Mammary epithelial cell (primary cell): ENCODE measurements at regions of chr20 and their contacts with region 1.

Region 1: GRCh38 chr20:38962044-38962927 is at the start of gene DHX35:
- DNase-seq: peak; percentile 95
- H3K4me3 ChIP-seq: peak within 1 kb of the TSS; percentile 80 to 84 (median 83)
- H3K27ac ChIP-seq: peak within 1 kb of the TSS; percentile 76
- H3K4me1 ChIP-seq: peaks cover 7% of the 10 kb centered on the region
- H3K27me3 ChIP-seq: no peaks in the 10 kb centered on the region
- CTCF ChIP-seq: peak in 1 of 2 donors; percentile 56
- total RNA-seq, gene DHX35: 8.1 to 9.5 TPM

Region 2: DNA sequence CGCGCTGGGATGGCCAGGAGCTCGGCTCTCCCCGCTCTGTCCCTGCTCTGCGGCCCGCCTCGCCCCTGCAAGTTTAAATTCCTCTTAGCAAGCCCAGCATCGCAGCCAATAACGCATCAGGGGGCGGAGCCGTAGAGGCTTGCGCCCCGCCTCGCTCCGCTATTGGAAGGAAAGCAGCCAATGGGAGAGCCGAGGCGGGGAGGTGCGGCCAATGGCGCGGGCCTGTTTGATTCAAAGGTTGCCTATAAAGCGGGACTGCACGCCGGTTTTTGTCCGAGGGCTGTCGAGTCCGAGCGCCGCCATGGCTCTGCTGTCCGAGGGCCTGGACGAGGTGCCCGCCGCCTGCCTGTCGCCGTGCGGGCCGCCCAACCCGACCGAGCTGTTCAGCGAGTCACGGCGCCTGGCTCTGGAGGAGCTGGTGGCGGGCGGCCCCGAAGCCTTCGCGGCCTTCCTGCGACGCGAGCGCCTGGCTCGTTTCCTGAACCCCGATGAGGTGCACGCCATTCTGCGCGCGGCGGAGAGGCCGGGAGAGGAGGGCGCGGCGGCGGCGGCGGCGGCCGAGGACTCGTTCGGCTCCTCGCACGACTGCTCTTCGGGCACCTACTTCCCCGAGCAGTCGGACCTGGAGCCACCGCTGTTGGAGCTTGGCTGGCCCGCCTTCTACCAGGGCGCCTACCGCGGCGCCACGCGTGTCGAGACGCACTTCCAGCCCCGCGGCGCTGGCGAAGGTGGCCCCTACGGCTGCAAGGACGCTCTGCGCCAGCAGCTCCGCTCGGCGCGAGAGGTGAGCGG is 35.9 kb before region 1 on chr20 and contains the start of gene FAM83D:
- CTCF ChIA-PET with region 1: interaction called, 11 read pairs
- dilution Hi-C with region 1: no loop called
- in situ Hi-C with region 1: no loop called
- intact Hi-C with region 1: loop called (anchors 1 kb)
- DNase-seq: peak; percentile 98
- H3K4me3 ChIP-seq: peak within 1 kb of the TSS; percentile 56 to 79 (median 77)
- H3K27ac ChIP-seq: peak within 1 kb of the TSS; percentile 41
- H3K4me1 ChIP-seq: peaks cover 11% of the 10 kb centered on the region
- H3K27me3 ChIP-seq: no peaks in the 10 kb centered on the region
- CTCF ChIP-seq: no peak
- total RNA-seq, gene FAM83D: 3.7 to 29.9 TPM

Region 3: GRCh38 chr20:38937978-38938473 is 24.3 kb before region 1 on chr20:
- CTCF ChIA-PET with region 1: no interaction called
- dilution Hi-C with region 1: no loop called
- in situ Hi-C with region 1: no loop called
- intact Hi-C with region 1: no loop called
- DNase-seq: no peak
- H3K4me3 ChIP-seq: no peak overlapping the region
- H3K27ac ChIP-seq: no peak overlapping the region
- H3K4me1 ChIP-seq: peaks cover 13% of the 10 kb centered on the region
- H3K27me3 ChIP-seq: no peaks in the 10 kb centered on the region
- CTCF ChIP-seq: no peak

Region 4: GRCh38 chr20:39089029-39089428 is 126.7 kb after region 1 on chr20:
- CTCF ChIA-PET with region 1: interaction called, 10 read pairs
- dilution Hi-C with region 1: no loop called
- in situ Hi-C with region 1: no loop called
- intact Hi-C with region 1: no loop called
- DNase-seq: no peak
- H3K4me3 ChIP-seq: no peak overlapping the region
- H3K27ac ChIP-seq: no peak overlapping the region
- H3K4me1 ChIP-seq: no peaks in the 10 kb centered on the region
- H3K27me3 ChIP-seq: no peaks in the 10 kb centered on the region
- CTCF ChIP-seq: no peak